ENCODE measurements at regions of chr13 and their contacts with region 1.

Region 1: GRCh38 chr13:39783050-39783449 is 127.6 kb downstream of the COG6 start:
- DNase-seq: peak; percentile 11 to 46 (median 36)
- H3K4me3 ChIP-seq: no peak overlapping the region
- H3K27ac ChIP-seq: no peak overlapping the region
- H3K4me1 ChIP-seq: peaks cover 0 to 13% (median 6%) of the 10 kb centered on the region in 4 experiments
- H3K27me3 ChIP-seq: no peaks in the 10 kb centered on the region

Region 2: DNA sequence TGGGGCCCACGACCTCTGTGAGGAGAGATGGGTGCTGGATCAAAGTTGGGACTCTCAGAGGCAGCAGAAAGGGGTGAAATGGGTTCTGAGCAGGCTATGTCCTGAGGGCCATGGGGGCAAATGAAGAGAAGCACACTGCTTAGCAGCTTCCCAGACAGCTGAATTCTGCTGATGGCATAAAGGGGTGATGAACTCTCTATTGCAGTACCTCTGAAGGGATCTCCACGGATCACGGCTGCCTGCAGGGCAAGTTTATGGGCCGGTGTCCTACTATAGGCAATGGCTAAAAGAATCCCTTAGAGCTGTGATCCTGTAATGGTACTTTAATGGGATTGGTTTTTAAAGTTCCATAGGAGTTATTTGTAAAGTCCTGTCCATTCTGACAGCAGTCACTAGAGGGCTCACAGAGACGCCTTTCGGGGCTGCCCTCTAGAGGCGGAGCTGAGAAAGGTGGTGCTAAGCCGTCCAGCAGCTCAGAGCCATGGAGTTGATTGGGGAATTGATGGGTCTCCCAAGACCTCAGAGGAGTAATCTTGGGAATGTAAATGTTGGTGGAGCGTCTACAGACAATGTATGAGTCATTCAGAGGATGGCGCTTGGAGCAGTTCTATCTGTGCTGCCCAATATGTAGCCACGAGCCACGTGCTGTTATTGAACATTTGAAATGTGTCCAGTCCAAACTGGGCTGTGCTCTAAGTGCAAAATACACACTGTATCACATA is 159.7 kb after region 1 on chr13:
- CTCF ChIA-PET with region 1: interaction called, 17 read pairs
- POLR2A ChIA-PET with region 1: no interaction called
- DNase-seq: peak; percentile 71 to 80 (median 72)
- H3K4me3 ChIP-seq: no peak overlapping the region
- H3K27ac ChIP-seq: no peak overlapping the region
- H3K4me1 ChIP-seq: no peaks in the 10 kb centered on the region
- H3K27me3 ChIP-seq: no peaks in the 10 kb centered on the region